ENCODE measurements at regions of chr3 and their contacts with region 1.

Region 1: DNA sequence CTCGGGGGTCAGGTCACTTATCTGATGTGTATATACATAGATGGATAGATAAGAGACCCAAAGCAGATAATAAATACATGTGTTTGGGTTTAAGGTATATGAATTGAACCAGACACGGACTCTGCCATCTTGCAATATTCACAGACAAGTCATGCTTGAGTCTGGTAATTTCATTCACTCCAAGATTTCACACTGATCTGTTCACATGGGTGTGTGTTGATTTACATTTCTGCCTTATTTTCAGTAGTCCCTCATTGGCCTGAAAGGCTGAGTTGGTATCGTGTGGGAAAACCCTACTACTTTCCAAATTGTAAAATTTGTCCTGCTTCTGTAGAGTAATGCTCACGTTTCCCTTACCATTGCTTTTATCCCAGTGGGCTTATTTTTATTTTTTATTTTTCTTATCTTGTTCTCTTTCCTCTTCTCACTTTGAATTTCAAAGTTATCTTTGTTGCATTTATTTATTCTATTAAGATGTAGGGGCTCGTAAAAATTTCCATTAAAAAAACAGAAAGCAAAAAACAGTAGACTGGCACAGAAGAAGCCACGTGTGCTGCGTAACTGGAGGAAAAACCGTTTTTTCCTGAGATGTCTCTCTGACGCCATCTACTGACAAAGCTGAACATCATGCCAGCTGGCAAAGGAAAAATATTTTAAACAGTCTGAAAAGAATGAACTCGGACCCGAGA is 10.8 kb upstream of the MFSD1 start:
- DNase-seq: peak; percentile 46
- H3K4me3 ChIP-seq: peak overlapping the region in 2 of 3 experiments; percentile 2 to 16
- H3K27ac ChIP-seq: no peak overlapping the region
- H3K4me1 ChIP-seq: peaks cover 10% of the 10 kb centered on the region
- H3K27me3 ChIP-seq: no peaks in the 10 kb centered on the region
- CTCF ChIP-seq: peak; percentile 88

Region 2: DNA sequence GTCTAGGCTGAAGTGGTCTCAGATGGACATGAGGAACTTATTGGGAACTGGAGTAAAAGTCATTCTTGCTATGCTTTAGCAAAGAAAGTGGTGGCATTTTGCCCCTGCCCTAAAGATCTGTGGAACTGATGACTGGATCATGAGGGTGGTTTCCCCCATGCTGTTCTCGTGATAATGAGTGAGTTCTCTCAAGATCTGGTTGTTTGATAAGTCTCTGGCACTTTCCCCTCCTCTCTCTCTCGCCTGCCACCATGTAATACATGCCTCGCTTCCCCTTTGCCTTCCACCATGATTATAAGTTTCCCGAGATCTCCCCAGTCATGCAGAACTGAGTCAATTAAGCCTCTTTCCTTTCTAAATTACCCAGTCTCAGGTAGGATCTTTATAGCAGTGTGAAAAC is 231.5 kb before region 1 on chr3:
- CTCF ChIA-PET with region 1: no interaction called
- dilution Hi-C with region 1: no loop called
- in situ Hi-C with region 1: loop called in 1 of 2 experiments (anchors 10 kb)
- intact Hi-C with region 1: no loop called
- DNase-seq: no peak
- H3K4me3 ChIP-seq: no peak overlapping the region
- H3K27ac ChIP-seq: no peak overlapping the region
- H3K4me1 ChIP-seq: no peaks in the 10 kb centered on the region
- H3K27me3 ChIP-seq: no peaks in the 10 kb centered on the region
- CTCF ChIP-seq: no peak

Region 3: DNA sequence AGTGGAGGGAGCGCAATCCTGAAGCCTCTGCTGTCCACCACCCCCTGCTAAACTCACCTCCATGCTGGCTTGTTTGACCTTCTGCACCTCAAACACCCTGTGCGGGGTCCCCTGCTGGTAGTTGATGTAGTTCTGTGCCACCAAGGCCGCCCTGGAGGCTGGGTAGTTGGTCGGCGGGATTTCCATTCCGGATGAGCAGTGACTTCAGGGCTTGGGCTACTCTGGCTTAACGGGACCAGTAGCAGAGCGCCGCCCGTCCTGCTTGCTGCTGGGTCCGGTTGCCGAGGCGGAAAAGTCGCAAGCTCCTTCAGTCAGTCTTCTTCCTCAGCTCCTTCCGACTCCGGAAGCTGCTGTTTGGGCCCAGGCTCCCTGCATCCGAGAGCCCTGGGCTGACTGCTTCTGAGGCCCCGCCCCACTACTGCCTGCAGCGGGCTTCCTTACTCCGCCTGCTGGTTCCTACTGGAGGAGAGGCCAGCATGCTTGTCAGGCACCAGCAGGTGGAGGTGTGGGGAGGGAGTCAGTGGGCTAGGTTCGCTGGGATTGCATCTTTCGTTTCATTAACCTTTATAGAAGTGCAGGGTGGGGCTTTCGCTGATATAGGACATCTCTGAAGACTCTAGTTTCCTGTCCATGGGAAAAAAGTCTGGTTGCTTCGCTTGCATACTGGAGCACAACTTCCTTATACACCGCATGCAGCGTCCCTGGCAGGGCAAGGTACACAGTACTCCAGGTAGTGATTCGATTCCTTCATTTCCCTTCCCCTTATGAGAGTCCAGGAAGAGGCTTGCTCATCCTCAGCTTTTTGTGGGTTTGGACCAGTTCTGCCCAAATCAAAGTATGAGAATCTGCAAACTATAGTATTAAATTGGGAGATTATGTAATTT is 118.5 kb before region 1 on chr3 and contains the start of gene LXN:
- CTCF ChIA-PET with region 1: no interaction called
- dilution Hi-C with region 1: no loop called
- in situ Hi-C with region 1: loop called in 1 of 2 experiments (anchors 10 kb)
- intact Hi-C with region 1: loop called (anchors 1 kb)
- DNase-seq: peak; percentile 89
- H3K4me3 ChIP-seq: peak within 1 kb of the TSS; percentile 44 to 65 (median 57)
- H3K27ac ChIP-seq: peak within 1 kb of the TSS; percentile 24
- H3K4me1 ChIP-seq: peaks cover 11% of the 10 kb centered on the region
- H3K27me3 ChIP-seq: no peaks in the 10 kb centered on the region
- CTCF ChIP-seq: peak; percentile 64 to 94
- total RNA-seq, gene LXN: 6.4 to 9.2 TPM

Region 4: GRCh38 chr3:158845765-158846350 is 54.8 kb after region 1 on chr3:
- CTCF ChIA-PET with region 1: no interaction called
- dilution Hi-C with region 1: no loop called
- in situ Hi-C with region 1: no loop called
- intact Hi-C with region 1: loop called (anchors 1 kb)
- DNase-seq: no peak
- H3K4me3 ChIP-seq: no peak overlapping the region
- H3K27ac ChIP-seq: no peak overlapping the region
- H3K4me1 ChIP-seq: no peaks in the 10 kb centered on the region
- H3K27me3 ChIP-seq: peaks cover 2% of the 10 kb centered on the region
- CTCF ChIP-seq: peak; percentile 52 to 69

Region 5: DNA sequence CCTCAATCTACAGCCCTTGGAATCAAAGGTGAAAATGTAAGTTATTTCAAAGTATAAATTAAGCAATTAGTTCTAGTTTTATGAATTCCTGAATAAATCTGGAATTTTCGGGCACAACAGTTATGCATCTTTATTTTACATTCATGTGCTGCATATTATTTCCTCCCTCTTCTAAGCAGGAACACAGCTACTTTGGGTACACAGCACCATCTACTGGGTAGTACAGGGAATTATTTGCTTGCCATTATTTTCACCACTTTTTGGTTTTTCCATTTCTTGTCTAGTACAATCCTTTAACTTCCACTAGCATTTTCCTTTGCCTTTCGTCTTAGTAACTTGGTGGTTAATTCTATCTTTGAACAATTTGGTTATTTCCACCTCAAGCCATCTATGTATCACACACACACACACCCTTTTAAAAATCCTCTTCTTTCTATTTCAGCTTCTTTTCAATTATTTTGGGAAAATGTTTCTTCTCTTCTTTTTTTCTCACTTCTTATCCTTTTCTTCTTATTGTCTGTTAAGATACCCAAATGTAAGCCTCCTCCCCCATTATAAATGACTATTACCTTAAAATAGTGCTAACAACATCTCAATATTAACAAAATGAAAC is 461.8 kb after region 1 on chr3:
- CTCF ChIA-PET with region 1: interaction called, 6 read pairs
- dilution Hi-C with region 1: no loop called
- in situ Hi-C with region 1: no loop called
- intact Hi-C with region 1: loop called (anchors 1 kb)
- DNase-seq: peak; percentile 48
- H3K4me3 ChIP-seq: no peak overlapping the region
- H3K27ac ChIP-seq: no peak overlapping the region
- H3K4me1 ChIP-seq: no peaks in the 10 kb centered on the region
- H3K27me3 ChIP-seq: no peaks in the 10 kb centered on the region
- CTCF ChIP-seq: peak; percentile 79 to 85

Region 6: GRCh38 chr3:159332535-159333099 is 541.6 kb after region 1 on chr3:
- CTCF ChIA-PET with region 1: no interaction called
- dilution Hi-C with region 1: no loop called
- in situ Hi-C with region 1: no loop called
- intact Hi-C with region 1: no loop called
- DNase-seq: no peak
- H3K4me3 ChIP-seq: no peak overlapping the region
- H3K27ac ChIP-seq: no peak overlapping the region
- H3K4me1 ChIP-seq: no peaks in the 10 kb centered on the region
- H3K27me3 ChIP-seq: no peaks in the 10 kb centered on the region
- CTCF ChIP-seq: no peak

Measured in mammary epithelial cell (primary cell).